HAP-1 (cell line): ENCODE measurements at regions of chr1 and their contacts with region 1.

Region 1: DNA sequence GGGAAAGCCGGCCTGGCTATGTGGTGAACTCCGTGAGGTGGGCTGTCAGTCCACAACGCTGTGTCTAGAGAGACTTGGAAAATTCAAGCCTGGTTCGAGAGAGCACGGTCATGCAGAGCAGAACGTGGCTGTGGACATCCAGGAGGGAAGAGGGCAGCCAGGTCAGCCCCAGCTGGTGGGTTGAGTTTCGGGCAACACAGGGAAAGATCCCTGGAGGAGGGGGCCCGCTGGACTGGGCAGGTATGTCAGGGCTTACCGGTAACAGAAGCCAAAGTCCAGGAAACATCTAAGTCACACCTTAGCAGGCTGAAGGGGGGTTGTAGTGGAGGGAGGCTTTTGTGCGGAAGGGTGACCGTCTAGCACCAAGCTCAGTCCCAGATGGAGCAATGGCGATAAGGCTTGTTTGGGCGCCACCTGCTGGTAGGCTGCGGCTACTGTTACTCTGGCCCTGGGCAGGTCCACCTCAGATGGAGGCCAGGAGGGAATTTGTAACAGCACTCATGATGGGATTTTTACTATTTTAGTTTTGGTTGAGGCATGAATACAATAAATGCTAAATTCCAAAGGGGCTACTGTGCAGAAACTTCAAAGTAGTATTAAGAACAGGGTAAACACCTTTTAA is 143.3 kb upstream of the ZNF644 start:
- DNase-seq: peak; percentile 50 to 91
- H3K4me3 ChIP-seq: no peak overlapping the region
- H3K4me1 ChIP-seq: no peaks in the 10 kb centered on the region
- H3K27me3 ChIP-seq: no peaks in the 10 kb centered on the region

Region 2: DNA sequence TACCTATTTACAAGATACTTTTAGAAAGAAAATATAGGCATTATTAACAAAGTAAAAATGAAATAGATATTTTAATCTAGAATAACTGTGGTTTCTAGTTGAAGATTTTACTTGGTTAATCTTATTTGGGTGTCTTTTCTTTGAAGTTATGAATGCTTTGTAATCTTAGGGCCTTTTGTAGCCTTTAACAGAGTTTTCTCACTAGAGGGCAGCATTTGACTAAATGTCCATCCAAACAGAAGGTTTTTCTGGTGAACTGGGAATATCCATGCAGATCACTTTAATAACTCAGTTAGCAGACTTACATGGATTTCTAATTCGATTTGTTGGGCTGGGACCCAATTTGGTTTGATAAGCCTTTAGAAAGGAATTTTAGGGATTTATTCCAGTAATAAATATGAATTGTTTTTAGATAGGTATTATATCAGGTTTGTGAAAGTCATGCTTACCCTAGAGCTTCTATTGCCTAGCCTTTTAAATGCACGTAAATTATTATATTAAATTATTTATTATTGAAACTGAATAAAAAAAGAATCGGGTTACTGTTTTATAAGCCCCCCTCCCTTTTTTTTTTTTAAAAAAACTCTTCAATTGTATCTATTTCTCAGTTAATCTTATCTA is 1050.5 kb before region 1 on chr1:
- in situ Hi-C with region 1: loop called (anchors 25 kb)
- DNase-seq: peak in 1 of 2 experiments; percentile 65
- H3K4me3 ChIP-seq: no peak overlapping the region
- H3K4me1 ChIP-seq: no peaks in the 10 kb centered on the region
- H3K27me3 ChIP-seq: peaks cover 27% of the 10 kb centered on the region

Region 3: GRCh38 chr1:90721210-90722194 is 443.6 kb before region 1 on chr1:
- in situ Hi-C with region 1: loop called (anchors 25 kb)
- DNase-seq: peak; percentile 83 to 85
- H3K4me3 ChIP-seq: no peak overlapping the region
- H3K4me1 ChIP-seq: no peaks in the 10 kb centered on the region; the same call in 1 of the 2 replicates
- H3K27me3 ChIP-seq: peaks cover 7% of the 10 kb centered on the region; the same call in 1 of the 2 replicates

Region 4: DNA sequence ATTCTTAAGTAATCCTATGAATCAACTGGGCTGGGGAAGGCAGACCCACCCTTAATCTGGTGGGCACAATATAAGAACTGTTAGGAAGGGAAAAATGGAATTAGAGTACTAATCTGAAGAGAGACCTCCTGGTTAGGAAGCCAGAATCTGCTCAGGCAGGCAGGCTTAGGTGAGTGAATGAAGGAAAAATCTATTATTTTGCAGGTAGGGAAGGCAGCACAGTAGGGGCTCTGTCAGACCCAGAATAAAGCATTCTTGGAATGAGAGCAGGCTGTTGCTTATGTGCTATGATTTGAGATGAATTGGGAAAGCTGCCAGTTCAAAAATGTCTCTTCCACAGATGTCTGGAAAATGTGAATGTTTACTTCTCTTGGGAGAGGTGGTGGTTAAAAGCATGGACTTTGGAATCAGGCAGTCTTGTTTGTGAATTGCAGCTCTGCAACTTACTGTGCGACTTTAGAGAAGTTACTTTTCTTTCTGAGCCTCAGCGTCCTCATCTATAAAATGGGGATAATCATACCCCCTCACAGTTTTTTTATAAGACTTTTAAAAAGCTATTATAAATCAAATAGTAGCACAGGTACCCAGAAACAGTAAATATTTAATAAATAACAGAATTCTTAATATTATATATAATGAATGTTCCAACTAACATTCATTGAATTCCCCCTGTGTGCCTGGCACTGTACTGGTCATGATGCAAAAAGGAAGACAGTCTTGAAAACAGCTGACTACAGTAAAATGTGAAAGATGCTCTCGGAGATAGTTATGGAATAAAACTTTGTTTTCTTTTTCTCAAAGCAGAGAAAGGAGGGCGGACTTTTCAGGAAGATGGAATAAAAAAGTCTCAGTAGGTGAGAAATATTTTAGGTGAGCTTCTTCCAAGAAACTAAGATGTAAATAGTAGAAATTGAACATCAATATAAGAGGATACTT is 128.0 kb before region 1 on chr1:
- in situ Hi-C with region 1: no loop called
- DNase-seq: no peak
- H3K4me3 ChIP-seq: no peak overlapping the region
- H3K4me1 ChIP-seq: no peaks in the 10 kb centered on the region
- H3K27me3 ChIP-seq: no peaks in the 10 kb centered on the region

Region 5: GRCh38 chr1:91226471-91227120 is 61.5 kb after region 1 on chr1:
- in situ Hi-C with region 1: no loop called
- DNase-seq: no peak
- H3K4me3 ChIP-seq: no peak overlapping the region
- H3K4me1 ChIP-seq: no peaks in the 10 kb centered on the region
- H3K27me3 ChIP-seq: no peaks in the 10 kb centered on the region

Region 6: GRCh38 chr1:91282695-91283420 is 117.7 kb after region 1 on chr1:
- in situ Hi-C with region 1: loop called (anchors 5 kb)
- DNase-seq: peak; percentile 71 to 75
- H3K4me3 ChIP-seq: no peak overlapping the region
- H3K4me1 ChIP-seq: no peaks in the 10 kb centered on the region
- H3K27me3 ChIP-seq: no peaks in the 10 kb centered on the region

Region 7: GRCh38 chr1:91440845-91441244 is 275.7 kb after region 1 on chr1:
- in situ Hi-C with region 1: no loop called
- DNase-seq: no peak
- H3K4me3 ChIP-seq: no peak overlapping the region
- H3K4me1 ChIP-seq: no peaks in the 10 kb centered on the region
- H3K27me3 ChIP-seq: no peaks in the 10 kb centered on the region

Region 8: DNA sequence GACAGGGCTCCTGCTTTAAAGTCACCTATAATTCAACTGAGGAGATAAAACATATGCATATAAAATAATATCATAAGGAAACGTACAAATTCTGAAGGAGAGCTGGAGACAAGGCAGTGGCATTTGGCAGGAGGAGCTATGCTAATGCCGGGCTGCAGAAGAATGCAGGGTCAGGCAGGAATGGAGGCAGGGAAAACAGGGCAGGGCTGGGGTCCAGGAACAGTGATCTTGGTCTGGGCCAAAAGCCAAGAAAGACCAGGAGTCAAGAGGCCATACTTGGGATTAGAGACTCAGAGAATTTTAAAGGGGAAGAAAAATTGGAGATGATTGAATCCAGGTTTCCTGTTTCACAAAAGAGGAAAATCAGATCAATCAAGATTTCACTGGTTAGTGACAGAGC is 764.1 kb after region 1 on chr1:
- in situ Hi-C with region 1: loop called (anchors 25 kb)
- DNase-seq: peak; percentile 69 to 77
- H3K4me3 ChIP-seq: no peak overlapping the region
- H3K4me1 ChIP-seq: peaks cover 2% of the 10 kb centered on the region; the same call in 1 of the 2 replicates
- H3K27me3 ChIP-seq: no peaks in the 10 kb centered on the region